ENCODE measurements at regions of chr17 and their contacts with region 1.

Region 1: DNA sequence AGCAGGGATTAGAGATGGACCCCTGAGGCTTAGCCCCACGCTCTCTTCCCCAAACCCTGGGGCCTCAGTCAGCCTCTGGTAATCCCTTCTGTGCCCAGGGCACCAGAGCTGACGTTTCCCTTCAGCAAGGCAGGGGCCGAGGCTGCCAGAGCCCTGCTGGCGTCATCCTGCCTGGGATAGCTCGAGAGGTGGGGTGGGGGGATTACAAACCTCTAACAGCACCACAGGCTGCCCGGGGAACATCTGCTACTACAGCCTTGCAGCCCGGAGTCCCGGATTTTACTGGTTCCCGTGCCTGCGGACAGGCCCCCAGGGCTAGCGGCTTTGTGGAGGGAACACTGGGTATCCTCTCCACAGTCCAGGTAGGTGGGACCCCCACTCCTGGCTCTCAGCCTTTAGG is at the start of gene AANAT:
- DNase-seq: no peak
- CTCF ChIP-seq: no peak

Region 2: DNA sequence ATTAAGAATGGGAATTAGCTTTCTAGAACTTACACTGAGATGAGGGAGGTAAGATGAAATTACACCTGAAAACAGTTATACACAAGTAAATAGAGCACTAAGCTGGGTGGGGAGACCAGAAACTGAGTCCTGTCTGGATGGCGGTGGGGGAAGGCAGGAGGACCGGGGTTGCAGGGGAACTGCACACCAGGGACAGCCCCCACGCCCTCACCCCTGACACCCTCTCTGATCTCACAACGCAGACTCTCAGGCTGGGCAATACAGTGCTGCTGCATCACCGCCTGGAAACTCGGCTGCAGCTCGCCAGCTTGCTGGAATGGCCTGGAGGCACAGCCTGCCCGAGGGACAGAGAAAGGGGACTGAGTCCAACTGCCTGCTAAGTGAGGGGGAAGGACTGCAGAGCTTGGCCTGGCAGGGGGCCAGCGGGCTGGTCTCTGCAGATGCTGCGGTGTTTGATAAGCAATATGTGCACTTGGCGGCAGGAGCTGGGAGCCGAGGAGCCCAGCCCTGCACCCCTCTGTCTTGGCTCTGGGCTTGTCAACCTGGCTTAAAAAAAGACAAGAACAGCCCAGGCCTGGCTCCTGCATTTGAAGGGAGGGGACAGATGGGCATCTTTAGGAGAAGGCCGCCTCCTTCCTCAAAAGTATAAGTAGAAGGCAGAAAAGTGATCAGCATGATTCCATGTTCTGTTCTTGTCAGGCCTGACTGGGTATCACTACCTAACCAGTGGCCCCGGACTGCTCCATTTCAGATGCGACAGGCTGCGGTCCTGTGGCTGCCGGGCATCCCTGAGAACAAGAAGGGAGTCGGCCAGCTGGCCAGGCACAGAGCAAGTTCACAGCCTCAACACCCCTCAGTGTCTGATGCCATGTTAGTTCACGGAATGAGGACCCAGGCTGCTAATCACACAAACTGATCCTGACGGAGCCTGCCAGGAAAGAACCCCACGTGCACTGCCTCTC is 52.8 kb before region 1 on chr17:
- in situ Hi-C with region 1: no loop called
- DNase-seq: peak; percentile 10
- CTCF ChIP-seq: no peak

Region 3: DNA sequence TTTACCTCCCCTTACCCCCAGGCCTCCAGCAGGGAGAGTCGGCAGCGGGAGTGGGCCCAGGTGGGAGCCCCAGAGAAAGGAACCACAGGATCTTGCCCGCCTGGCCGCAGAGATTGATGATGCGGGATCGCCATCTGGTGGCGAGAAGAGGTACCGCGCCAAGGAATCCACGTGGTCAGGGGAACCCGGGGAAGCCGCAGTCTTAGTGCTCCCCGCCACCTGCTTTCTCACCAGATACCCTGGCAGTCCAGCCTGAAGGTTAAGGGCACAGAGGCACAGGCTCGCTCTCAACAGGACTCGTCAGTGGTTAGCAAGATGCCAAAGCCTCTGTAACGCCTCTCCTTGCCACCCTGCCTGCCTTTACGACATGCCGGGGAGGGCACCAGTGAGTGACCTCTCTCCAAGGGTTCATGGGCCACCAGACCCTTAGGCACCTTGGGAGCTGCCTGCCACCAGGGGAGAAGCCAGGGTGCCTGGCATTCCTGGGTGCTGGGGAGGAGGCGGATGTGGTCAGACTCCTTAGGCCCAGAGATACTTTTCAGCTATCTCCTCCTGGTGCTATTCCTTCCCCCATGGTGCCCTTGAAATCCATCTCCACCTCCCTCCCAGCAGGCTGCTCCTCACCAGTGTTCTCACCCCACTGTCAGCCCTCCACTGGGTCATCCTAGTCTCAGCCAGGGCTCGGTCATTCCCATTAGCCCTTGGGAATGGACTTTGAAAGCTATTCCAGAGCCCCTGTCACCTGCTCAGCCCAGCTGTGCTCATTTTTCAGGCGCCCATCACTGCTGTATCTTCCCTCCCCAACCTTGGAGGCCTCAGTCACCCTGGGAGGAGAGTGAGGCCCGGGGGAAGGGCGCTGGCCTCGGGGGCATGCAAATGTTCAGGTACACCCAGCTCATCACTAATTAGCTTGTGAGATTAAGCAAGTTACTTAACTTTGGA is 39.3 kb after region 1 on chr17:
- in situ Hi-C with region 1: loop called (anchors 5 kb)
- DNase-seq: peak; percentile 87
- CTCF ChIP-seq: peak; percentile 95

Measured in GM13977 (cell line).